Activated naive CD4-positive, alpha-beta T cell treated with anti-CD3 and anti-CD28 coated beads for 36 hours (primary cell): ENCODE measurements at regions of chr12 and their contacts with region 1.

Region 1: DNA sequence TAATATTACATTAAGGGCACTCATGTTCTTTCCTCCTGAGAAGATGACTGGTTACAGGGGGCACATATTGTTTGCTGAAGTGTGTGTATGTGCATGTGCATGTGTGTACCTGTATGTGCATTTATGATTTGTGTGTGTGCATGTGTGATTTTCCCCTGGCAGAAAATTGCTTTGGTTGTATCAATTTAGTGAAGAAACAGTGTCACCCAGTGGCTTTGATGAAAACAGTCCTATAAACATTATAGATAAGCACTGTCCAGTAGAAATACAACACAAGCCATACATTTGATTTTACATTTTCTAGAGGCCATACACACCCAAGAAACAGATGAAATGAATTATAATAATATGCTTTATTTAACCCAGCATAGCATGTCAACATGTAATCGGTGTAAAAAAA is 8.6 kb downstream of the PDE3A start:
- DNase-seq: no peak
- H3K4me3 Mint-ChIP-seq: no peak overlapping the region
- H3K27ac Mint-ChIP-seq: no peak overlapping the region
- H3K4me1 Mint-ChIP-seq: no peaks in the 10 kb centered on the region
- H3K27me3 Mint-ChIP-seq: peaks cover 3% of the 10 kb centered on the region

Region 2: DNA sequence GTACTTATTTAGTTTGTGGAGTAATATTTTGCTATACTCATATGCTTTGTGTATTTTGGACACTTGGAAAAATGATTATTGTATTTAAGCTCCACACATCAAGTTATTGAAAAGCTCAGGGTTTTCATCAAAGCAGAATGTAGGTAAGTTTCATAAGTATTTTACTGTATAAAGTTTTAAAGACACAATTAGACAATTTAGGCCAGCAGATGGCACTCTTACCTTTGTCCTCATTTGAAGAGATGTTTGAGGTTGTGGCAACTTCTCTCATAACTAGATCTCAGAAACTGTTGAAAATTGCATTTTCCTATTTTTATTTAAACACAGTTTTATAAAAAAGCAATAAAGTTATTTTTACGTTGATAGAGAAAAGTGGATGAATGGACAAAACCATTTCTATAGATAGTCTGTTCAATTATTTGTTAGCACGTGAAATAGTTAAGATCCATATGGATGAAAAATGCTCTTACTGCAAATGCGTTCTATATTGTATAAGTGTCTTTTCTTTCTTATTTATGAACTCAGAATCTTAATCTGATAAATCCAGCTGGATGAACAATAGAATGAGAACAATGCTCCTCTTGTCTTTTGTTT is 637.7 kb before region 1 on chr12:
- CTCF ChIA-PET with region 1: no interaction called
- intact Hi-C with region 1: loop called (anchors 5 kb)
- DNase-seq: peak; percentile 46
- H3K4me3 Mint-ChIP-seq: no peak overlapping the region
- H3K27ac Mint-ChIP-seq: no peak overlapping the region
- H3K4me1 Mint-ChIP-seq: no peaks in the 10 kb centered on the region
- H3K27me3 Mint-ChIP-seq: no peaks in the 10 kb centered on the region

Region 3: GRCh38 chr12:19757317-19757877 is 619.6 kb before region 1 on chr12:
- CTCF ChIA-PET with region 1: no interaction called
- intact Hi-C with region 1: loop called (anchors 5 kb)
- DNase-seq: no peak
- H3K4me3 Mint-ChIP-seq: no peak overlapping the region
- H3K27ac Mint-ChIP-seq: no peak overlapping the region
- H3K4me1 Mint-ChIP-seq: no peaks in the 10 kb centered on the region
- H3K27me3 Mint-ChIP-seq: no peaks in the 10 kb centered on the region

Region 4: DNA sequence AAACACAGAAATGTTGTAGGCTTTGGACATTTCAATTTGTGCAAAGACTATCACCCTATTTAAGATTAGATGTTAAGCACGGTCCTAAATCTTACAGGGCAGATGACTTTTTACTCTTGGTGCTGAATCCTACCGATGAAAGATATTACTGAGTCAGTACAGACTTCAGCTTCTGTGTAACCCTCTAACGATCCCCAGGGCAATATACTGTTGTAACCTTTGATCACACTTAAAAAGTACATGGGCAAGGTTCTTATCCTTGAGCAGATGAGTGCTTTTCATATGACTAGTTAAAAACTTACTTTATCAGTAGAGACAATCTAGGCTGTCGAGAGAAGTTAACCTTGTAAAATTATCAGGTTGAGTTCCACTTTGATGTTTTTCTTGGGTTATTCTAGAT is 13.9 kb after region 1 on chr12:
- CTCF ChIA-PET with region 1: no interaction called
- intact Hi-C with region 1: no loop called
- DNase-seq: no peak
- H3K4me3 Mint-ChIP-seq: no peak overlapping the region
- H3K27ac Mint-ChIP-seq: no peak overlapping the region
- H3K4me1 Mint-ChIP-seq: no peaks in the 10 kb centered on the region
- H3K27me3 Mint-ChIP-seq: no peaks in the 10 kb centered on the region